Aorta (tissue), 5 donors: ENCODE measurements at regions of chr7 and their contacts with region 1.

Region 1: DNA sequence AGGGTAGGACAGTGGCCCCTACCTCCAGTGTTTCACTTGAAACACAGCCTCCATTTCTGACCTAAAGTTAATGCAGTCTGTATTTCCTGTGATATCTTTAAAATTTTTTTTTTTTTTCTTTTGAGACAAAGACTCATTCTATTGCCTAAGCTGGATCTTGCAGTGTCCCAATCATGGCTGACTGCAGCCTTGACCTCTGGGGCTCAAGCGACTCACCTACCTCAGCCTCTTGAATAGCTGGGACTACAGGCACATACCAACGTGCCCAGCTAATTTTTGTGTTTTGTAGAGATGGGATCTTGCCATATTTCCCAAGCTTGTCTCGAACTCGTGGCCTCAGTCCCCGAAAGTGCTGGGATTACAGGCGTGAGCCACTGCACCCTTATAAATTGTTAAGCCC is 16.7 kb upstream of the MGAM2 start:
- DNase-seq: no peak
- ATAC-seq: no peak
- H3K4me3 ChIP-seq: no peak overlapping the region
- H3K27ac ChIP-seq: no peak overlapping the region
- H3K4me1 ChIP-seq: peaks cover 0 to 2% of the 10 kb centered on the region in 2 donors
- H3K27me3 ChIP-seq: no peaks in the 10 kb centered on the region

Region 2: GRCh38 chr7:142063551-142064442 is 31.1 kb before region 1 on chr7:
- intact Hi-C with region 1: loop called in 1 of 2 experiments (anchors 1 kb)
- DNase-seq: no peak
- ATAC-seq: no peak
- H3K4me3 ChIP-seq: no peak overlapping the region
- H3K27ac ChIP-seq: no peak overlapping the region
- H3K4me1 ChIP-seq: no peaks in the 10 kb centered on the region
- H3K27me3 ChIP-seq: no peaks in the 10 kb centered on the region

Region 3: DNA sequence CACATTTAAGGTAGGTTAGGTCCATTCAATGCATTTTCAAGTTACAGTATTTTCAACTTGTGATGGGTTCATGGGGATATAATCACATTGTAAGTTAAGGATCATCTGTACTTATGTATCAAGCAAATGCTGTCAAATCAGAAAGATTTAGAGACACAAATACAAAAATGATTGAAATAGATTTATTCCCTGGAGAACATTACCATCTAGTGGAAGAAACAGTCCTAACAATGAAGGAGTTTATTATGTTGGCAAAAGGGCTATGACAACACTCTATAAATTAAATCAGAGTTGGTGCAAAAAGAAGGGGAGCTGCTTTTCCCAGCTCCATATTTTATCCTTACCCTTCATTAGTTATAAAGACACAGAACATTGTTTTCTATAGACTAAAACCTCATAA is 94.0 kb after region 1 on chr7:
- intact Hi-C with region 1: no loop called
- DNase-seq: no peak
- ATAC-seq: no peak
- H3K4me3 ChIP-seq: no peak overlapping the region
- H3K27ac ChIP-seq: no peak overlapping the region
- H3K4me1 ChIP-seq: no peaks in the 10 kb centered on the region
- H3K27me3 ChIP-seq: no peaks in the 10 kb centered on the region